CD8-positive, alpha-beta T cell (primary cell): ENCODE measurements at regions of chr6 and their contacts with region 1.

Region 1: DNA sequence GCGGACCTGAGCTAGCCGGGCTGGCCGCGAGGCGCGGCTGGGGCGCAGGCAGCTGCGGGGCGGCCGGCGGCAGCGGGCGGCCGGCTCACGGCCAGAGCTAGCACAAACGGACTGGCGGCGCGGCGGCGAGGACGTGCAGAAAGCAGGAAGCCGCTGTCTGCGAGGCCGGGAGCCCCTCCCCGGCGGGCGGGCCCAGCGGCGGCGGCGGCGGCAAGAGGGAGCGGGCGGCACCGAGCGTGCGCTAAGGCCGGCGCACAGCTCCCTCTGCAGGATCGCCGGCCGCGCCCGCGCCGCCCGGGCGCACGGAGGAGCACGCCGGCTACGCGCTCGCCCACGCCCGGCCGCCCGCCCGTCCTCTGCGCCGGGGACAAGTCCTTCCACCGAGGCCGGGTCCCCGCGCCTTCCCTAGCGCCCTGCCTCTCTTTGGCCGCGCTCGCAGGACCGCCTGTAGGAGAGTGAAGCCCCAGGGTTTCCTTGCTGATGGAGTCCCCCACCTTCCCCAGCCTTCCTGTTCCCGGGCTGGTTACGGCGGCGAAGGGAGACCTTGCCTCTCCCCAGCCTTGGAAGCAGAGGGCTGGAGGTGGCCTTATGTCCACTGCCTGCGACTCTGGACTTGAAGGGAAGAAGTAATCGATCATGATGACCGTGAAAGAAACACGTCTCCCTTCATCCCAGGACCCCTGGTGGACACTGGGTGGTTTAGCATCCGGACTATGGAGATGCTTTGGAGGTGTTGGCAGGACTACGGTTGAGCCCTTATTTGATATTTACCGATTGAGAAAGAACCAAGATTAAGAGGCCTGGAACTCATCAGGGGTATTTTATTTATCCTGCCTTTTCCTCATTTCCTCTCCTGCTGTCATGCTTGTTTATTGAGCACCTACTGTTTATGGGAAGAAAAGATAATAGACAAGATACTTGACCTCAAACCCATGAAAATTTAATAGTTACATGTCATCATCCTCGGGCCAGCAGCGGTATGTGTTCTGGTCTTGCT is at the start of gene PREP:
- DNase-seq: peak; percentile 62 to 90 (median 80)
- ATAC-seq: peak; percentile 94
- H3K4me3 ChIP-seq: peak within 1 kb of the TSS; percentile 90 to 95
- H3K4me3 Mint-ChIP-seq: peak within 1 kb of the TSS; percentile 90
- H3K27ac ChIP-seq: peak within 1 kb of the TSS; percentile 58 to 61
- H3K27ac Mint-ChIP-seq: peak within 1 kb of the TSS; percentile 73
- H3K4me1 ChIP-seq: peaks cover 46% of the 10 kb centered on the region
- H3K4me1 Mint-ChIP-seq: peaks cover 50% of the 10 kb centered on the region
- H3K27me3 ChIP-seq: no peaks in the 10 kb centered on the region
- H3K27me3 Mint-ChIP-seq: peaks cover 12% of the 10 kb centered on the region
- CTCF ChIP-seq: peak; percentile 83
- total RNA-seq, gene PREP: 15.7 to 17.6 TPM

Region 2: GRCh38 chr6:104859225-104860146 is 543.8 kb before region 1 on chr6 and contains the start of gene HACE1:
- CTCF ChIA-PET with region 1: no interaction called
- POLR2A ChIA-PET with region 1: no interaction called
- intact Hi-C with region 1: loop called (anchors 2 to 5 kb)
- DNase-seq: peak; percentile 74 to 92 (median 89)
- ATAC-seq: peak; percentile 97
- H3K4me3 ChIP-seq: peak within 1 kb of the TSS; percentile 80 to 83
- H3K4me3 Mint-ChIP-seq: peak within 1 kb of the TSS; percentile 93
- H3K27ac ChIP-seq: peak within 1 kb of the TSS; percentile 26 to 56
- H3K27ac Mint-ChIP-seq: peak within 1 kb of the TSS; percentile 85
- H3K4me1 ChIP-seq: peaks cover 10% of the 10 kb centered on the region
- H3K4me1 Mint-ChIP-seq: peaks cover 17% of the 10 kb centered on the region
- H3K27me3 ChIP-seq: no peaks in the 10 kb centered on the region
- H3K27me3 Mint-ChIP-seq: peaks cover 10% of the 10 kb centered on the region
- CTCF ChIP-seq: no peak
- total RNA-seq, gene HACE1: 8.4 to 9.0 TPM

Region 3: GRCh38 chr6:104987218-104987617 is 416.0 kb before region 1 on chr6:
- CTCF ChIA-PET with region 1: no interaction called
- POLR2A ChIA-PET with region 1: no interaction called
- intact Hi-C with region 1: no loop called
- DNase-seq: no peak
- ATAC-seq: no peak
- H3K4me3 ChIP-seq: no peak overlapping the region
- H3K4me3 Mint-ChIP-seq: no peak overlapping the region
- H3K27ac ChIP-seq: no peak overlapping the region
- H3K27ac Mint-ChIP-seq: no peak overlapping the region
- H3K4me1 ChIP-seq: no peaks in the 10 kb centered on the region
- H3K4me1 Mint-ChIP-seq: no peaks in the 10 kb centered on the region
- H3K27me3 ChIP-seq: peaks cover 0 to 3% of the 10 kb centered on the region in 2 experiments
- H3K27me3 Mint-ChIP-seq: no peaks in the 10 kb centered on the region
- CTCF ChIP-seq: no peak

Region 4: DNA sequence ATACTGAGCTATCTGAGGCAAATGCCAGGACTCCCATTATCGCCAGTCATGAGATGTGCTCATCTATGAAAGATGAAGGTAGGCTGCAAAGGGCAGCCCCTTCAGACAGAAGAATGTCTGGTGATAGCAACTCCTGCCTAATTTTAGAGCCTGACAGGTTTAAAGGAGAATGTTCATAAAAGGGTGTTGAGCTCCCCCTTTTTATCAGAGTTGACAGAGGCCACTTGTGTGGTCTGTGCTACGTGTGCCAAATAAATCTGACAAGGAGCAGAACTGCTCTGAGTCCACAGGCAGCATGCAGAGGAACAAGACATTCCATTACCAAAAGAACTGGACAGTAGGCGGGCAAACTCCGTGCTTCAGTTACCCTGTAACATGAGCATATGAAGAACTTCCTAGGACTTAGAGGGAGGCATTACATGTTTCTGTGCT is 102.1 kb before region 1 on chr6:
- CTCF ChIA-PET with region 1: no interaction called
- POLR2A ChIA-PET with region 1: no interaction called
- intact Hi-C with region 1: no loop called
- DNase-seq: no peak
- ATAC-seq: no peak
- H3K4me3 ChIP-seq: no peak overlapping the region
- H3K4me3 Mint-ChIP-seq: no peak overlapping the region
- H3K27ac ChIP-seq: no peak overlapping the region
- H3K27ac Mint-ChIP-seq: no peak overlapping the region
- H3K4me1 ChIP-seq: no peaks in the 10 kb centered on the region
- H3K4me1 Mint-ChIP-seq: no peaks in the 10 kb centered on the region
- H3K27me3 ChIP-seq: no peaks in the 10 kb centered on the region
- H3K27me3 Mint-ChIP-seq: no peaks in the 10 kb centered on the region
- CTCF ChIP-seq: no peak

Region 5: GRCh38 chr6:105317607-105318533 is 85.4 kb before region 1 on chr6:
- CTCF ChIA-PET with region 1: interaction called, 5 read pairs
- POLR2A ChIA-PET with region 1: no interaction called
- intact Hi-C with region 1: loop called (anchors 1 to 5 kb)
- DNase-seq: peak in 3 of 9 experiments; percentile 18 to 30 (median 26)
- ATAC-seq: no peak
- H3K4me3 ChIP-seq: no peak overlapping the region
- H3K4me3 Mint-ChIP-seq: no peak overlapping the region
- H3K27ac ChIP-seq: no peak overlapping the region
- H3K27ac Mint-ChIP-seq: no peak overlapping the region
- H3K4me1 ChIP-seq: no peaks in the 10 kb centered on the region
- H3K4me1 Mint-ChIP-seq: no peaks in the 10 kb centered on the region
- H3K27me3 ChIP-seq: no peaks in the 10 kb centered on the region
- H3K27me3 Mint-ChIP-seq: no peaks in the 10 kb centered on the region
- CTCF ChIP-seq: no peak

Region 6: DNA sequence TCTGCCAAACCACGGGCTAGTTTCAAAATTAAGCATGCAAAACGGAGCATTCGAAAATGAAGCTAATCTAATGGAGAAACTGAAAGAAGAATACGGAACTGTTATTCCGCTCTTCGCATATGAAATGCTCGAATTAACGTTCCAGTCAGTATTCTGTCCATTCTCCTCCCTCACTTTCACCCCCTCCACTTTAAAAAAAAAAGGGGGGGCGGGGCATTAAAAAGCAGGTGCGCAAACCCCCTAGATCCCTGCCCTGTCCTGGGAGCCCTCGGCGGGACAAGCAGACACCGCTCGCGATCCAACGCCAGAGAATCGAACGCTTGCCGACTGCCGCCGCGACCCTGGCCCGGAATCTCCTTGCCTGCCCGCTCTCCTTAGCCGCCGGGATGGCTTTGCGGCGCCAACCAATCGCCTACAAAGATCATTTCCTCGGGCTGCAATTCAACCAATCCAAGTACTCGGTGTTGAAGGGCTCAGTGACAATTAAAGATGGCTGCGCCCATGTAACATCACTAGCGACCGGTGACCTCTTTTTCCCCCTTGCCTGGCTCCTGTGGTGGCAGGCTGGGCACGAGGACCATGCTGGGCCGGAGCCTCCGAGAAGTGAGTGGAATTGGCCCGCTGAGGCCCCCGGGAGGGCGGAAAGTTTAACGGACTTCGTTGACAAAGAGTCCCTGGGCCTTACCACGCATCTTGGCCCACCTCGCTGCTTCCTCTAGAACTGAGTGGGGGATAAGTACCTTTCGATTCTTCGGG is 1226.0 kb after region 1 on chr6 and contains the starts of genes QRSL1 and RTN4IP1:
- CTCF ChIA-PET with region 1: no interaction called
- POLR2A ChIA-PET with region 1: no interaction called
- intact Hi-C with region 1: loop called in 1 of 2 experiments (anchors 2 kb)
- DNase-seq: peak; percentile 70 to 95 (median 82)
- ATAC-seq: peak; percentile 90
- H3K4me3 ChIP-seq: peak within 1 kb of the TSS; percentile 86 to 93
- H3K4me3 Mint-ChIP-seq: peak within 1 kb of the TSS; percentile 99
- H3K27ac ChIP-seq: peak within 1 kb of the TSS; percentile 83 to 88
- H3K27ac Mint-ChIP-seq: peak within 1 kb of the TSS; percentile 99
- H3K4me1 ChIP-seq: peaks cover 19% of the 10 kb centered on the region
- H3K4me1 Mint-ChIP-seq: peaks cover 43% of the 10 kb centered on the region
- H3K27me3 ChIP-seq: no peaks in the 10 kb centered on the region
- H3K27me3 Mint-ChIP-seq: no peaks in the 10 kb centered on the region
- CTCF ChIP-seq: no peak
- total RNA-seq, gene QRSL1: 11.1 to 11.6 TPM
- total RNA-seq, gene RTN4IP1: 1.8 to 1.9 TPM